ENCODE measurements at regions of chr10 and their contacts with region 1.

Region 1: DNA sequence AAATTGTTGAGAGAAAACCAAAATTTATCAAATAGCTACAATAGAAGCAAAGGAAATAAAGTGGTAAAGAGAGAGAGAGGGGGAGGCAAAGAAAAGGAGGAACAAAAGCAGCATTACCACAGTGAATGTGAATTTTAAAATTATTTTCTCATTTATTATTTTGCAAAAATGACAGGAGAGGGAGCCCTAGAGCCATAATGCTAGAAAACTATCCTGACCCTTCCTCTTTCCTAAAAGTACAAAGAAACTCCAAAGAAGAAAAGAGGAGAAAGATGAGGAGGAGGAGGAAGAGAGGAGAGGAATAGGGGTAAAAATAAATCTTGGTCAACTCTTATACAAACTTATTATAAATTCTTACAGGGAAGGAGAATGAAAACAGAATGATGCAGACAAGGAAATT is 921.5 kb downstream of the NRG3 start:
- DNase-seq: no peak
- ATAC-seq: peak in 1 of 2 donors; percentile 23

Region 2: DNA sequence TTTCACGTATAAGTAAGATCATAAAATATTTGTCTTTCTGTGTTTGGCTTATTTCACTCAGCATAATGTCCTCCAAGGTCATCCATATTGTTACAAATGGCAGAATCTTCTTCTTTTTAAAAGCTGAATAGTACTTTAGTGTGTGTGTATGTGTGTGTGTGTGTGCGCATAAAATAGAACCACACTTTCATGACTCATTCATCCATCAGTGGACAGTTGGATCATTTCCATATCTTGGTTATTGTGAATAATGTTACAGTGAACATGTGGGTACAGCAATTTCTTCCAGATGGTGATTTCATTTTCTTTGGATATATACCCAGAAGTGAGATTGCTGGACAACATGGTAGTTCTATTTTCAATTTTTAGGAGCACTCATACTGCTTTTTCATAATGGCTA is 299.1 kb before region 1 on chr10:
- intact Hi-C with region 1: no loop called
- DNase-seq: no peak
- ATAC-seq: no peak

Region 3: DNA sequence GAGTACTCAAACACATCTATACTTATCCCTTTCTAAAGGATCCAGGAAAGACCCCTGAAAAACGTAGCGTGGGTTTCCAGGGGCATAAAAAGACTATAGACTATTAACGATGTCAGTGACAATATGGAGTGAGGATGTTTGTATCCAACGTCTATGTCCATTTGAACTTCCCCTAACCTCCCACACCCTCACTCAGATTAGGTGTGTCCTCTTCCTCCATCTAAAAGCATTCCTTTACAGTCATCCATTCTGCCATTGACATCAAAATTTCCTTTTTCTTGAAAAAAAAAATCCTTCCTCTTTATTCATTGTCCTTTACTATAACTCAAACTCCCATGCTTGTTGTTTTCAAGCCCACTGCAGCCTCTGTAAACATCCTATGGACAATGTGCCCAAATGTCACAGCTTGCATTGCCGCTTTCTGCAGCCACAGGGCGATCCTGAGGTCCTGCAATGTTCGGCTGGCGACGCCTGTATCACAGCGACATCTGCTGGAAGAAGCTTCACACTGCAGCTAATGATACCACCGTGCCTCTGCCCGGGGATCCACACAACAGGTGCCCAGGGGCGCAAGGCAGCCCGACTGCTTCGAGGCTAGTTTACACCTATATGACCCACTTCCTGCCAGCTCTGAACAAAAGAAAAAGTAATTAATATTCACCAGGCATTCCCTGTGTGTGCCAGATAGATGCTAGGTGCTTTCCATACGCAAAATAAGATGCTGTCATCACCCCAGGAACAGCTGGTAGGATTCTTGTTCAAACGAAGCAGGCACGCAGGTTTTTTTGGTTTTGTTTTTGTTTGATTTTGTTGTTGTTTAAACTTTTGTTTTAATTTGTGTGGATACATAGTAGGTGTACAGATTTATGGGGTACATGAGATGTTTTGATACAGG is 1074.9 kb after region 1 on chr10:
- intact Hi-C with region 1: loop called in 1 of 2 experiments (anchors 10 kb)
- DNase-seq: peak; percentile 69
- ATAC-seq: peak; percentile 76 to 91